Caco-2 (cell line): ENCODE measurements at regions of chr11 and their contacts with region 1.

Region 1: GRCh38 chr11:69131644-69132300 is 24.0 kb upstream of the SMIM38 start:
- DNase-seq: peak; percentile 94 to 96
- H3K4me3 ChIP-seq: no peak overlapping the region
- H3K4me3 Mint-ChIP-seq: no peak overlapping the region
- H3K27ac Mint-ChIP-seq: peak overlapping the region; percentile 74
- H3K4me1 ChIP-seq: peaks cover 22% of the 10 kb centered on the region
- H3K4me1 Mint-ChIP-seq: peaks cover 16% of the 10 kb centered on the region
- H3K27me3 ChIP-seq: no peaks in the 10 kb centered on the region
- H3K27me3 Mint-ChIP-seq: no peaks in the 10 kb centered on the region
- CTCF ChIP-seq: peak; percentile 98

Region 2: DNA sequence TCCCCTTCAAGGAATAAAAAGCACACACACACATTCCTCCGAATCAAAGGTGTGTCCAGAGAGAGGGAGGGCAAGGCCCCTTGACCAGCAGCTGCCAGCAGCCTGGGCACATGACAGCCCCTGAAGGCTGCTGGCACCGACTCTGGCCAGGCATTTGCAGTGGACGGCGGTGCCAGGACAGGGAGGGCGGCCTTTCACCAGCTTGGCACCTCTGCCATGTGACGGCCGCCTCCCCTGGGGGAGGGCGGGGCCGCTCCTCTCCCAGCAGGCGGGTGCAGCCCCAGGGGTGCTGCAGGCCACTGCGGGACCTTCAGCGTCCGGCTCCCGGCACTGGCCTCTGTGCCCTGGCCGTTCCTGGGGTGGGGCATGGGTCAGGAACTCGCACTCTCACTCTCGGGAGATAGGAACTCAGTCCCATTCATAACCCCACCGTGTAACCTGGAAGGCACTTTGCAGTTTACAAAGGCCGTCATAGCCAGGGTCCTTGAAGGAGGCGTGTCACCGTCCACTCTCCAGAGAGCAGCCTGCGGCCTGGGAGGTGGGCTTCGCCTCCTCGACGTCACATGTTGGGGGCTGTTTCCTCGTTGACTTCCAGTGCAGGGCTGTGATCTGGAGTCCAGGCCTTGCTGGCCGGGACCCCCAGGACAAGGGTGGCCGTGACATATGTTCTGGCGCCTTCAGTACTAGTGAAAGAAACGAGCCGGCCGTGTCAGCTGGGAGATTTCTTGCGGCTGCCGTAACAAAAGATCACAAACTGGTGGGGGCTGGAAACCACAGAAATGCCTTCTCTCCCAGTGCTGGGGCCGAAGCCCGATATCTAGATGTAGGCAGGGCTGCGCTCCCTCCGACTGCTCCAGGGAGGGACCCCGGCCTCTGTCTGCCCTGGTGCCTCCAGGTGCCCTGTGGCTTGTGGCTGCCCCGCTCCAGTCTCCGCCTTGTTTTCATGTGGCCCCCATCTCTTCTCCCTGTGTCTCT is 15.9 kb before region 1 on chr11:
- CTCF ChIA-PET with region 1: interaction called, 30 read pairs
- POLR2A ChIA-PET with region 1: no interaction called
- intact Hi-C with region 1: no loop called
- DNase-seq: peak in 1 of 2 experiments; percentile 33
- H3K4me3 ChIP-seq: no peak overlapping the region
- H3K4me3 Mint-ChIP-seq: no peak overlapping the region
- H3K27ac Mint-ChIP-seq: peak overlapping the region; percentile 66
- H3K4me1 ChIP-seq: peaks cover 47% of the 10 kb centered on the region
- H3K4me1 Mint-ChIP-seq: peaks cover 36% of the 10 kb centered on the region
- H3K27me3 ChIP-seq: no peaks in the 10 kb centered on the region
- H3K27me3 Mint-ChIP-seq: no peaks in the 10 kb centered on the region
- CTCF ChIP-seq: no peak

Region 3: DNA sequence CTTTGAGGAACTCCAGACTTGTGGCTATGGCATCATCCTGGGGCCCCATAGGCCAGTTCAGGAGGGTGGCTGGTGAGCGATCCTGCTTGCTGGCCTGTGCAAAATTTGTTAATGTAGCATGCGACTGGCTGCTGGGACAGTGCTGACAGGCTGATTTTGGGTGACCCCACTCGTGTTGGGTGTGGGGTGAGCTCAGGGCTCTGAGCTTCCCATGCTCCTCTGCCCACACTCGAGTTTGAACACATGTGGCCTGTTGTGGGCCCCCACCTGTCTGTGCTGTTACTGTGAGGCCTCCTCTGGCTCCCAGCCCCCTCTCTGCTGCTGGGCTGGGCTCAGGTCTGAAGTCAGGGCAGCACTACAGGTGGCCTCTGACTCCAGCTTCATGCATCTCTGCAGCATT is 97.7 kb after region 1 on chr11:
- CTCF ChIA-PET with region 1: no interaction called
- POLR2A ChIA-PET with region 1: no interaction called
- intact Hi-C with region 1: no loop called
- DNase-seq: no peak
- H3K4me3 ChIP-seq: no peak overlapping the region
- H3K4me3 Mint-ChIP-seq: no peak overlapping the region
- H3K27ac Mint-ChIP-seq: no peak overlapping the region
- H3K4me1 ChIP-seq: no peaks in the 10 kb centered on the region
- H3K4me1 Mint-ChIP-seq: peaks cover 6% of the 10 kb centered on the region
- H3K27me3 ChIP-seq: no peaks in the 10 kb centered on the region
- H3K27me3 Mint-ChIP-seq: peaks cover 20% of the 10 kb centered on the region
- CTCF ChIP-seq: no peak

Region 4: DNA sequence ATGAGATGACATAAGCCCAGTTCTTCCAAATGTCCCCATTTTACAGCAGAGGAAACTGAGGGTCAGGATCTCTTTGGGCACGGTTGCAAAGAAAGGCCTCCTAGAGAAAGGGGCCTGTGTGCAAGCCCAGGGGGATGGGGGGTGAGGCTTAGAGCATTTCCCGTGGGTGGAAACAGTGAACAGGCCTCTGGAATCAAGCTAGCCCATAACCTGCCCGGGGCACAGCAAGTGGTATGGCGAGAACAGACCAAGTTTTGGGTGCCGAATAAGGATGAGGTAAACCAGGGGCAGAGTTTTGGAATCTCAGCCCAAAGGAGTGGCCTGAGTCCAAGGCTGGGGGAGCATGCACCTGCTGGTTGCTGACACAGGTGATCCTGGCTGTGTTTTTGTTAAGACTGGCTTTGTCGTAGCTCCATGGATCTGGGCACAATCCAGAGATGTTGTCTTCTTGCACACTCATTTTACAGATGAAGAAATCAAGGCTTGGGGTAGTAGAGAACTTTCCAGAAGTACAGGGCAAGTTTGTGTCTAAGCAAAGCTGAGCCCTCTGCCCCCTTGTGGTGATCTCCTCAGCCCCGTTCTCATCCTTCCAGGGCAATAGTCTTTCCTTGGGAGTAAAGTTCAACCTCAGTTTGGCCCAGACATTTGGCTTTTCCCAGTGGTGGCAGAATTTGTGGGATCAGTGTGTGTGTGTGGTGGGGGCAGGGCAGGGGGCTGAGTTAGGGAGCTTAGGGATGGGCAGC is 108.7 kb after region 1 on chr11:
- CTCF ChIA-PET with region 1: interaction called, 5 read pairs
- POLR2A ChIA-PET with region 1: no interaction called
- intact Hi-C with region 1: loop called (anchors 1 kb)
- DNase-seq: peak; percentile 52 to 56
- H3K4me3 ChIP-seq: no peak overlapping the region
- H3K4me3 Mint-ChIP-seq: no peak overlapping the region
- H3K27ac Mint-ChIP-seq: no peak overlapping the region
- H3K4me1 ChIP-seq: no peaks in the 10 kb centered on the region
- H3K4me1 Mint-ChIP-seq: no peaks in the 10 kb centered on the region
- H3K27me3 ChIP-seq: no peaks in the 10 kb centered on the region
- H3K27me3 Mint-ChIP-seq: peaks cover 2% of the 10 kb centered on the region
- CTCF ChIP-seq: peak; percentile 47 to 59

Region 5: GRCh38 chr11:69287968-69288882 is 156.5 kb after region 1 on chr11:
- CTCF ChIA-PET with region 1: interaction called, 15 read pairs
- POLR2A ChIA-PET with region 1: no interaction called
- intact Hi-C with region 1: loop called (anchors 1 kb)
- DNase-seq: peak; percentile 98 to 99
- H3K4me3 ChIP-seq: peak overlapping the region; percentile 15
- H3K4me3 Mint-ChIP-seq: peak overlapping the region; percentile 65
- H3K27ac Mint-ChIP-seq: peak overlapping the region; percentile 48
- H3K4me1 ChIP-seq: peaks cover 53% of the 10 kb centered on the region
- H3K4me1 Mint-ChIP-seq: peaks cover 37% of the 10 kb centered on the region
- H3K27me3 ChIP-seq: no peaks in the 10 kb centered on the region
- H3K27me3 Mint-ChIP-seq: no peaks in the 10 kb centered on the region
- CTCF ChIP-seq: no peak

Region 6: DNA sequence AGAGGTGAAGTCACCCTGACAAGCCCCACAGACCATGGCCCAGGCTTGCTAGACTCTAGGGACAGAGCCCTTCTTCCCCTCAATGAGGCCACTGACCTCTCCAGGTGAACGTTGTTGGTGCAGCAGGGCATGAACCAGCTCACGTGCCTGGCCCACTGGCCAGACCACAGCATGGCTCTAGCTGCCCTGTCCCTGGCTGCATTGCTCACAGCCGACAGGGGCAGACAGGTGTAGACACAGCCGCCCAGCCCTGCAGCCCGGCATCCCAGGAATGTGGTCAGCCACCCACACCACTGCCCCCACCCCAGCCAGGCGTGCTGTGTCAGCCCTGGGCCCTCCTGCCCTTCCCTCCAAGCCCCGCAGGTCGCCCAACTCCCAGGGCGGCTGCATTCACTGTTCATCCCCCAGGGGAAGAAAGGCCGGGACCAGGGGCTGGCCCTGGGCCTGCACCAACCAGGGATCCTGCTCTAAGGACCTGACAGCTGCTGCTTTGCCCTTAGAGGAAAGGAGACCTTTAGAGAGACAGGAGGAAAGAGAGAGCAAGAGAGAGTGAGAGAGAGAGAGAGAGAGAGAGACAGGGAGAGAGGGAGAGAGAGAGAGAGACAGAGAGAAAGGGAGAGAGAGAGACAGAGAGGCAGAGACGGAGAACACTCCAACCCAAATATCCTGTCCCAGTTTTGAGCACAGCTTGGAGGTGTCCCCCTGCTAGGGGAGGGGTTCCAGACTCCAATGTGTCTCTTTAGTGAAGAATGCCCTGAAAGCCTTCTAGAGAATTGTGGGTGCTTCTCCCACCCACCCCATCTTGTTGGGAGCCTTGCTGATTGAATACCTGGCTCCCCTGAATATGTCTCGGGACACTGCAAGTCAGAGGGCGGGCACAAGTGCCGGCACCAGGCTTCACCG is 305.5 kb after region 1 on chr11:
- CTCF ChIA-PET with region 1: interaction called, 12 read pairs
- POLR2A ChIA-PET with region 1: no interaction called
- intact Hi-C with region 1: no loop called
- DNase-seq: peak; percentile 100
- H3K4me3 ChIP-seq: no peak overlapping the region
- H3K4me3 Mint-ChIP-seq: peak overlapping the region; percentile 44
- H3K27ac Mint-ChIP-seq: peak overlapping the region; percentile 92
- H3K4me1 ChIP-seq: peaks cover 75% of the 10 kb centered on the region
- H3K4me1 Mint-ChIP-seq: peaks cover 62% of the 10 kb centered on the region
- H3K27me3 ChIP-seq: no peaks in the 10 kb centered on the region
- H3K27me3 Mint-ChIP-seq: no peaks in the 10 kb centered on the region
- CTCF ChIP-seq: peak; percentile 42 to 57